ENCODE measurements at regions of chr13 and their contacts with region 1.

Region 1: GRCh38 chr13:46553886-46554858 is 1.2 kb downstream of the LRCH1 start:
- DNase-seq: peak; percentile 91
- H3K4me3 Mint-ChIP-seq: peak overlapping the region; percentile 97
- H3K27ac Mint-ChIP-seq: peak overlapping the region; percentile 90
- H3K4me1 Mint-ChIP-seq: peaks cover 45% of the 10 kb centered on the region
- H3K27me3 Mint-ChIP-seq: peaks cover 6% of the 10 kb centered on the region

Region 2: GRCh38 chr13:46052319-46053161 is 501.6 kb before region 1 on chr13 and contains the start of gene ZC3H13:
- intact Hi-C with region 1: loop called (anchors 10 kb)
- DNase-seq: peak; percentile 98
- H3K4me3 Mint-ChIP-seq: peak within 1 kb of the TSS; percentile 94
- H3K27ac Mint-ChIP-seq: peak within 1 kb of the TSS; percentile 98
- H3K4me1 Mint-ChIP-seq: peaks cover 32% of the 10 kb centered on the region
- H3K27me3 Mint-ChIP-seq: peaks cover 20% of the 10 kb centered on the region
- total RNA-seq, gene ZC3H13: 56.1 and 58.8 TPM in 2 replicates

Region 3: DNA sequence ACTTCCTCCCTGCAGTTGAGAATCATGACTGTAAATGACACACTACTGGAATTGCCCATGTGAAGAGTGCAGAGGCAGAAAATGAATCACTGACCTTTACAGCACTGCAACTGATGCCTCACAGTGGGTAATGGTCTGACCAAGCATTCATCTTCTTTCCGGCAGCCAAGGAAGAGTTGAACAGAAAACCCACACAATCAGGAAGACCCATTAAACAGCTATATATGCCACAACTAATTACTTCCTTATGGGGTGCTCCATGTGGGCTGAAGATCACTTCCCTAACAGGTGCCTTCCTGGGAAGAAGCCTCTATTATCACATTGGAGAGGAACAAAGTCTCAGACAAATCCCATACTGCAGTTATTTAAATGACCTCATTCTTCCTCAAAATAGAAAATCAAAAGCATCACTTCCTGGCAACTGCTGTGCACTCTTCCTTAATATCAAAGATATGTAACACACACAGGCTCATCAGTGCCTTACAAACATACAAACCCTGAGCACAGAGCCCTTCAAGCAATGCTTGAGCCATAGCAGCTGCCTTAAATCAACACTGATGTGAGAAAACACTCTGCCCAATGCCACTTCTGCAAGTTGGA is 213.0 kb before region 1 on chr13:
- intact Hi-C with region 1: loop called (anchors 5 kb)
- DNase-seq: peak; percentile 67
- H3K4me3 Mint-ChIP-seq: peak overlapping the region; percentile 15
- H3K27ac Mint-ChIP-seq: peak overlapping the region; percentile 79
- H3K4me1 Mint-ChIP-seq: peaks cover 38% of the 10 kb centered on the region
- H3K27me3 Mint-ChIP-seq: no peaks in the 10 kb centered on the region

Region 4: GRCh38 chr13:46530084-46530935 is 23.9 kb before region 1 on chr13:
- intact Hi-C with region 1: loop called (anchors 2 kb)
- DNase-seq: no peak
- H3K4me3 Mint-ChIP-seq: no peak overlapping the region
- H3K27ac Mint-ChIP-seq: peak overlapping the region; percentile 68
- H3K4me1 Mint-ChIP-seq: peaks cover 22% of the 10 kb centered on the region
- H3K27me3 Mint-ChIP-seq: peaks cover 6% of the 10 kb centered on the region

Region 5: GRCh38 chr13:46565808-46566750 is 11.9 kb after region 1 on chr13:
- intact Hi-C with region 1: no loop called
- DNase-seq: no peak
- H3K4me3 Mint-ChIP-seq: no peak overlapping the region
- H3K27ac Mint-ChIP-seq: no peak overlapping the region
- H3K4me1 Mint-ChIP-seq: peaks cover 6% of the 10 kb centered on the region
- H3K27me3 Mint-ChIP-seq: no peaks in the 10 kb centered on the region

Region 6: GRCh38 chr13:46595136-46595886 is 41.1 kb after region 1 on chr13:
- intact Hi-C with region 1: loop called (anchors 1 kb)
- DNase-seq: no peak
- H3K4me3 Mint-ChIP-seq: no peak overlapping the region
- H3K27ac Mint-ChIP-seq: no peak overlapping the region
- H3K4me1 Mint-ChIP-seq: peaks cover 60% of the 10 kb centered on the region
- H3K27me3 Mint-ChIP-seq: peaks cover 5% of the 10 kb centered on the region

Region 7: GRCh38 chr13:46633416-46633815 is 79.2 kb after region 1 on chr13:
- intact Hi-C with region 1: no loop called
- DNase-seq: no peak
- H3K4me3 Mint-ChIP-seq: no peak overlapping the region
- H3K27ac Mint-ChIP-seq: no peak overlapping the region
- H3K4me1 Mint-ChIP-seq: peaks cover 35% of the 10 kb centered on the region
- H3K27me3 Mint-ChIP-seq: no peaks in the 10 kb centered on the region

Region 8: DNA sequence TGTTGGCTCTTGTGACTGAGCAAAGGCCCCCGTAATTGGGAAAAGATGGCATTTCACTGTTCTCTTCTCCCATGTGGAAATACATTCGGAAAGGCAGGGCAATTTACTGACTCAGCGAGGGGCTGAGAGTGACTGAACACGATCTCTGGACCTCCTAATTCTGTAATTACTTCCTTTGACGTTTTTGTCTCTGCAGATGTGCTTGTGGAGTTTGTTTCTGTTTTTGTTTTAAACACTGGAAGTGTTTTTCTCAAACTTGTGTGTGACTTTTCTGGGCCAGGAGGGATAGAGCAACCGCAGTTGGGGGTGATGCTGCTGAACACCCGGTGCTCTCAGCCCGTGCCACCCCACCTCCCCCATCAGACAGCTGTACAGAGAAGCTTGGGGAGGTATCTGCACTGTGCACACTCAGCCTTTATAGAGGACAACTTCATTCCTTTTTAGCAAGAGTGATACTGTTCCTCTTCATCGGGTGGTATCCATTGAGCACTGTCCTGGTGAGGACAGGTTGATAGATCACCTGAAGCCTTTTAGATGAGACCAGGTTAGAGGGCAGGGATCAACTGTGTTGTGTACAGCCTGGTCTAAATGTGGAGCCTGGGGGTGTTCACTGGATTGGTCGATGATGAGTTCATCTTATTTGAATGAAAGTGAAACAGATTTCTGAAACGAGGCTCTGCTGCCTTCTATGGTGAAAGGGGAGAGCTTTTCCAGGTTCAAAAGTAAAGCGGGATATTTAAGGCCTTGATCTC is 125.4 kb after region 1 on chr13:
- intact Hi-C with region 1: loop called (anchors 1 kb)
- DNase-seq: peak; percentile 86
- H3K4me3 Mint-ChIP-seq: no peak overlapping the region
- H3K27ac Mint-ChIP-seq: no peak overlapping the region
- H3K4me1 Mint-ChIP-seq: peaks cover 26% of the 10 kb centered on the region
- H3K27me3 Mint-ChIP-seq: no peaks in the 10 kb centered on the region

Region 9: DNA sequence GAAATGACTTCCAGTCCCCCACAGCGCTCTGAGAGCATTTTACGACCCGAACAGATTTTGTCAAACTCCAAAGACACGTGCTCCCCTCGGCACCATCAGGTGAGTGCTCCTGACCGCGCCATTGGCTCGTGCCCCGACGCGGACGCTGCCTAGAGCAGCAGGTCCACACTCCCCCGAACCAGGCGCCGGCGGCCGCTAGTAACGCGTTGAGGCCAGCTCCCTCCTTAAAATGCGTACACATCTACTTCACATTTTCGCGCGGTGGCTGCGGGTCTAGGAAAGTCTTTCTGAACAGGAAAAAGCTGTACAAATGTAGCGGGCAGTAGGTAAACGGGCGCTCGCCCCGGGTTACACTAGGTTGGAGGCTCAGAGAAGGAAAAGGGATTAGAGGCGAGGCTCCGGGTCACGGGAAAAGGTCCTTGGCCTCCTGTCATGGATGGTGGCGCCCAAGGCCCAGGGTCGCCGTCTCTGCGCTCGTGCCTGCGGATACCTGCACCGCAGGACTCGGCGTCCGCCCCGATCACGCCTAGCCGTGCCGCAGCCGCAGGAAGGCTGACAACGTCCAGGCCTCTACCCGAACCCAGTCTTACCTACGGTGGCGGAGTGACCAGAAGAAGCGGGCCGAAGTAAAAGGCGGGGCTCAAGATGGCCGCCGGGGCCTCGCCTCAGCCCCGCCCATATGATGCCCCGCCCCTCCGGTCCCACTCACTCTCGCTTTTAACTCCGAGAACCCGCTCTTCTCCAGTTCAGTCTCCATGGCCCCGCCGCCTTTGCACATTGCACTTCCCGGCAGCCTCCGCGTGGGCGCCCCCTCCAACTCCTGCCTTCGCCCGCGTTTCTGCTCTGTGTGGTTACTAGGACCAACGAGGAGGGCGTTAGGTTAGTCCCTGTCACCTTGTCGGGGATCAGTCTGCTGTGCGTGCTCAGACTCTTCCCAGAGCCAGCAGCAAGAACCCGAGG is 242.6 kb after region 1 on chr13 and contains the start of gene ESD:
- intact Hi-C with region 1: loop called (anchors 2 kb)
- DNase-seq: peak; percentile 97
- H3K4me3 Mint-ChIP-seq: peak within 1 kb of the TSS; percentile 96
- H3K27ac Mint-ChIP-seq: peak within 1 kb of the TSS; percentile 98
- H3K4me1 Mint-ChIP-seq: peaks cover 27% of the 10 kb centered on the region
- H3K27me3 Mint-ChIP-seq: peaks cover 4% of the 10 kb centered on the region
- total RNA-seq, gene ESD: 127 and 128 TPM in 2 replicates